PC-3 (cell line): ENCODE measurements at regions of chr5 and their contacts with region 1.

Region 1: GRCh38 chr5:159106569-159107282 is 7.0 kb upstream of the EBF1 start:
- DNase-seq: peak; percentile 69
- ATAC-seq: peak; percentile 94
- H3K4me3 ChIP-seq: peak overlapping the region; percentile 44; the same call in 1 of the 2 replicates
- H3K27ac ChIP-seq: no peak overlapping the region
- H3K4me1 ChIP-seq: 0 out of 2 replicates have a peak, but pooled peaks cover 8% of the 10 kb centered on the region
- H3K27me3 ChIP-seq: peaks cover 44% of the 10 kb centered on the region
- CTCF ChIP-seq: peak; percentile 85

Region 2: GRCh38 chr5:158074992-158075769 is 1031.5 kb before region 1 on chr5:
- CTCF ChIA-PET with region 1: interaction called, 9 read pairs
- POLR2A ChIA-PET with region 1: no interaction called
- intact Hi-C with region 1: loop called (anchors 5 kb)
- DNase-seq: peak; percentile 86
- ATAC-seq: peak; percentile 97
- H3K4me3 ChIP-seq: peak overlapping the region; percentile 55
- H3K27ac ChIP-seq: no peak overlapping the region
- H3K4me1 ChIP-seq: peaks cover 5% of the 10 kb centered on the region
- H3K27me3 ChIP-seq: peaks cover 47% of the 10 kb centered on the region
- CTCF ChIP-seq: peak; percentile 98

Region 3: DNA sequence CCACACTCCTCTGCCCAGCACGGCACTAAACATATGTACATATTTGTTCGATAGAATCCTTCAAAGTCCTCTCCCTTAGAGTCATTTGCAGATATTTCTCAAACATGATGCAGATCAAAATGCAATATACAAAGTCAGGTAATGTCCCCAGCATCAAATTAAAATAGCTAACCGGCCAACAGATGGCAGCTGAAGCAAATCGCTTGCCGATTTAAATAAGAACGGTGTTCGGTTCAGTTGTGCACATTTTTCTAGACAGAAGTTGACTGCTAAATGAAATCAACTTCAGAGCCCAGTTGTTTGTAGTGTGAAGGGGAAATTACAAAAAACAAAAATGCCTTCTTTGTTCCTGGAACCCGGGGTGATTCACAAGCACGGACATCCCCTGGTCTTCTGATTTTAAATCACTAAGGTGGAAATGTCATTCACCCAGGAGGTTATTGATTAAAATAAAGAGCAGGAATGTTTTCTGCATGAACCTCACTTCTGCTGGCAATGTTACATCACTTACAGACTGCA is 226.2 kb before region 1 on chr5:
- CTCF ChIA-PET with region 1: interaction called, 5 read pairs
- POLR2A ChIA-PET with region 1: no interaction called
- intact Hi-C with region 1: loop called (anchors 1 kb)
- DNase-seq: peak; percentile 15
- ATAC-seq: no peak; the same call in 1 of the 2 replicates
- H3K4me3 ChIP-seq: peak overlapping the region; percentile 16; the same call in 1 of the 2 replicates
- H3K27ac ChIP-seq: no peak overlapping the region
- H3K4me1 ChIP-seq: peaks cover 4% of the 10 kb centered on the region; the same call in 1 of the 2 replicates
- H3K27me3 ChIP-seq: no peaks in the 10 kb centered on the region
- CTCF ChIP-seq: peak; percentile 29; the same call in 1 of the 2 replicates

Region 4: GRCh38 chr5:159061179-159061796 is 45.4 kb before region 1 on chr5:
- CTCF ChIA-PET with region 1: no interaction called
- POLR2A ChIA-PET with region 1: no interaction called
- intact Hi-C with region 1: no loop called
- DNase-seq: no peak
- ATAC-seq: no peak
- H3K4me3 ChIP-seq: no peak overlapping the region
- H3K27ac ChIP-seq: no peak overlapping the region
- H3K4me1 ChIP-seq: no peaks in the 10 kb centered on the region
- H3K27me3 ChIP-seq: no peaks in the 10 kb centered on the region
- CTCF ChIP-seq: no peak